H1 (cell line): ENCODE measurements at regions of chr5 and their contacts with region 1.

Region 1: DNA sequence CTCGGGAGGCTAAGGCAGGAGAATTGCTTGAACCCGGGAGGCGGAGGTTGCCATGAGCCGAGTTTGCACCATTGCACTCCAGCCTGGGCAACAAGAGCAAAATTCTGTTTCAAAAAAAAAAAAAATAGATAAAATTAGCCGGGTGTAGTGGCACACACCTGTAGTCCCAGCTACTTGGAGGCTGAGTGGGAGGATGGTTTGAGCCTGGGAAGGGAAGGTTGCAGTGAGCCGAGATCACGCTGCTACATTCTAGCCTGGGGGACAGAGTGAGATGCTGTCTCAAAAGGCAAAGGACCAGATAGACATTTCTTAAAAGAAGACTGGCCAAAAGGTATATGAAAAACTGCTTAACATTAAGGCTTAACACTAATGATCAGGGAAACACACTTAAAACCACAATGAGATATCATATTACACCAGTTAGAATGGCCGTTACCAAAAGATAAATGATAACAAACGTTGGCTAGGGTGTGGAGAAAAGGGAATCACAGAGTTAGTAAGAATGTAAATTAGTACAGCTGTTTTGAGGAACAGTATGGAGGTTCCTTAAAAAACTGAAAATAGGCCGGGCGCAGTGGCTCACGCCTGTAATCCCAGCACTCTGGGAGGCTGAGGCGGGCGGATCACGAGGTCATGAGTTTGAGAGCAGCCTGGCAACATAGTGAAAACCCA is 10.1 kb upstream of the MARVELD2 start:
- DNase-seq: no peak
- H3K4me3 ChIP-seq: no peak overlapping the region
- H3K27ac ChIP-seq: no peak overlapping the region
- H3K4me1 ChIP-seq: no peaks in the 10 kb centered on the region
- H3K27me3 ChIP-seq: no peaks in the 10 kb centered on the region
- CTCF ChIP-seq: no peak
- EP300 ChIP-seq: no peak
- POLR2A ChIP-seq: no peak
- RAD21 ChIP-seq: no peak

Region 2: GRCh38 chr5:69217548-69218526 is 187.0 kb before region 1 on chr5:
- CTCF ChIA-PET with region 1: no interaction called
- POLR2A ChIA-PET with region 1: no interaction called
- DNase-seq: peak; percentile 81 to 92
- H3K4me3 ChIP-seq: peak overlapping the region; percentile 89 to 99 (median 96)
- H3K27ac ChIP-seq: peak overlapping the region; percentile 96
- H3K4me1 ChIP-seq: no peaks in the 10 kb centered on the region
- H3K27me3 ChIP-seq: no peaks in the 10 kb centered on the region
- CTCF ChIP-seq: peak in 1 of 3 experiments; percentile 5; a peak in 1 of 4 replicates
- EP300 ChIP-seq: no peak
- POLR2A ChIP-seq: peak; percentile 72 to 96
- RAD21 ChIP-seq: no peak

Region 3: DNA sequence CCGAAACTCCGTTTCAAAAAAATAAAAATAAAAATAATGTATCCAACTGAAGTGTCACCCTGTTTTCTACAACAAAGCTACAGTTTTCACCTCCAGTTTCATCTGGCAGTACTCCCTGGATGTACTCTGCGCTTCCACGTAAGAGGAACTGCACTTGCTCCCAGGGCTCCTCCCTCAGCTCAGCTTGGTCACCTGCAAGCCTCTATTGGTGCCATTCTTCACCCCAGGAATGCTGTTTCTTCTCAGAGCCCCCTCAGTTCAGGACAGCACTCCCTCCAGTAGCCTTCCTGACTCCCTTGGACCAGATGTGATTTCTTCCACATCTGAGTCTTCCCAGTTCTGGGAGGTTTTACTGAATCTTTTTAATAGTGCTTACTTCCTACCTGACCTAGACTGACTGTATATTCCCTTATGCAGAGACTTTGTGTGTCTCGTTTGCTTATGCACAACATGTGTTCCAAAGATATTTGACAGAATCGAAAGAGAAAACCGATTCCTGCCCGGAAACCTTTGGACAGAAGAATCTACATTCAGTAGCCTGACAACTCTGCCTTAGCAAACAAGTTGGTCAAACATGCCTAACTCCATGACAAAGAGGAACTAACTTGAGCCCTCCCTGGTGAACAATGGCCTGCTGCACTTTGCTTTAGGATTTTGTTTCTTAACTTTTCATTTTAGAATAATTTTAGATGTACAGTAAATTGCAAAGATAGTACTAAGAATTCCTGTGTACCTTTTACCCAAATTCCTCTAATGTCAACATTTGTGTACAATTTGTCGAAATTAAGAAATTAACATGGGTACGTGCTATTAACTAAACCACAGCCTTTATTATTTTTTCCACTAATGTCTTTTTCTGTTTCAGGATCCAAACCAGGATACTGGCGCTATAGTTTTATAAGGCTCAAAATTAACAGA is 73.0 kb before region 1 on chr5:
- CTCF ChIA-PET with region 1: no interaction called
- POLR2A ChIA-PET with region 1: no interaction called
- DNase-seq: peak in 1 of 2 experiments; percentile 42
- H3K4me3 ChIP-seq: peak overlapping the region in 1 of 4 experiments; percentile 56; a peak in 2 of 8 replicates
- H3K27ac ChIP-seq: no peak overlapping the region
- H3K4me1 ChIP-seq: peaks cover 0 to 2% (median 0%) of the 10 kb centered on the region in 4 experiments; a peak in 3 of 7 replicates
- H3K27me3 ChIP-seq: no peaks in the 10 kb centered on the region
- CTCF ChIP-seq: no peak
- EP300 ChIP-seq: no peak
- POLR2A ChIP-seq: no peak
- RAD21 ChIP-seq: no peak

Region 4: DNA sequence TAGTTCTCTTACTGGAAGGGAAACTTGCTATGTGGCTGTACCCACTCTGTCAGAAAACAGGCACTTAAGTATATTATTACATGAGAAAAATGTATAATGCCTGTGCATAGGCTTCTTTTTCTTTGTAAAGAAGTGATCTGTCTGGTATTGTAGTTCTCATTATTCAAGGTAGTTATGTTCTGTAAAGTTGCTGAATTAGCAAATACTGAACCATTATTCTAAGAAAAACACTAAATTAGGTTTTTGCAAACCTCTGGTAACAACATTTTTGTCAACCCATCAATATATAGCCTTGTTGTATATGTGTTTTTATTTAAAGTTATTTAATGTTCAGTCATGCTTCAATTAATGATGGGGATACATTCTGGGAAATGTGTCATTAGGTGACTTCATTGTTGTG is 26.4 kb before region 1 on chr5:
- CTCF ChIA-PET with region 1: interaction called, 10 read pairs
- POLR2A ChIA-PET with region 1: no interaction called
- DNase-seq: no peak
- H3K4me3 ChIP-seq: no peak overlapping the region
- H3K27ac ChIP-seq: no peak overlapping the region
- H3K4me1 ChIP-seq: no peaks in the 10 kb centered on the region
- H3K27me3 ChIP-seq: no peaks in the 10 kb centered on the region
- CTCF ChIP-seq: no peak
- EP300 ChIP-seq: no peak
- POLR2A ChIP-seq: no peak
- RAD21 ChIP-seq: no peak

Region 5: GRCh38 chr5:69454460-69455249 is 49.9 kb after region 1 on chr5:
- CTCF ChIA-PET with region 1: no interaction called
- POLR2A ChIA-PET with region 1: no interaction called
- DNase-seq: no peak
- H3K4me3 ChIP-seq: no peak overlapping the region
- H3K27ac ChIP-seq: no peak overlapping the region
- H3K4me1 ChIP-seq: no peaks in the 10 kb centered on the region
- H3K27me3 ChIP-seq: no peaks in the 10 kb centered on the region
- CTCF ChIP-seq: no peak
- EP300 ChIP-seq: no peak
- POLR2A ChIP-seq: no peak
- RAD21 ChIP-seq: no peak

Region 6: GRCh38 chr5:69492391-69492922 is 87.7 kb after region 1 on chr5 and contains the start of gene OCLN:
- CTCF ChIA-PET with region 1: no interaction called
- POLR2A ChIA-PET with region 1: no interaction called
- DNase-seq: peak; percentile 74 to 92
- H3K4me3 ChIP-seq: peak within 1 kb of the TSS; percentile 82 to 96 (median 92)
- H3K27ac ChIP-seq: peak within 1 kb of the TSS; percentile 93
- H3K4me1 ChIP-seq: peaks cover 0 to 9% (median 6%) of the 10 kb centered on the region in 4 experiments; a peak in 4 of 7 replicates
- H3K27me3 ChIP-seq: no peaks in the 10 kb centered on the region
- CTCF ChIP-seq: no peak
- EP300 ChIP-seq: 0 out of 3 replicates have a peak, but pooled peaks of 1 of the 2 experiments have one; percentile 6
- POLR2A ChIP-seq: peak; percentile 54 to 91
- RAD21 ChIP-seq: peak in 1 of 2 experiments; percentile 3; a peak in 1 of 4 replicates
- total RNA-seq, gene OCLN: 76.3 and 85.5 TPM in 2 replicates